ENCODE measurements at regions of chr2 and their contacts with region 1.

Region 1: GRCh38 chr2:203871371-203871983 is 3.9 kb downstream of the CTLA4 start:
- DNase-seq: peak; percentile 67
- H3K4me3 Mint-ChIP-seq: peak overlapping the region; percentile 78
- H3K27ac Mint-ChIP-seq: peak overlapping the region; percentile 97
- H3K4me1 Mint-ChIP-seq: peaks cover 90% of the 10 kb centered on the region
- H3K27me3 Mint-ChIP-seq: no peaks in the 10 kb centered on the region

Region 2: DNA sequence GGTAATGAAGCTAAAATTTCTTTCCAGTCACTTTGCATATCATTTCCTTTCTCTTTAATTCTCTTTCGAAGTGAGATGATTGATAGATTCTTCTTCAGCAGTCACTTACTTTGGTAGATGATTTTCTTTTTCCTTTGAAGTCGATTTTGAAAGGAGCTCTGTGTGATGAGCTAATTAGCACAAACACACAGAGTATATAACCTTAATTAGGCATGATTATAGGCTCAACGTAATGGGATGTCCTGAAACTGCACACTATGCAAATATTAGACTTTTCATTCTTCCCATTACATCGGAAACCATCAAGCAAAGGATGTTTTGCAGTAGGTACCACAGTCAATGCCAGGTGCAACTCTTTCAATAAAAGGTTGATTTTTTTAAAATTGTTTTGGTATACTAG is 10.3 kb before region 1 on chr2:
- CTCF ChIA-PET with region 1: interaction called, 29 read pairs
- POLR2A ChIA-PET with region 1: no interaction called
- DNase-seq: no peak
- H3K4me3 Mint-ChIP-seq: no peak overlapping the region
- H3K27ac Mint-ChIP-seq: peak overlapping the region; percentile 20
- H3K4me1 Mint-ChIP-seq: peaks cover 57% of the 10 kb centered on the region
- H3K27me3 Mint-ChIP-seq: no peaks in the 10 kb centered on the region

Region 3: GRCh38 chr2:203891474-203891873 is 20.0 kb after region 1 on chr2:
- CTCF ChIA-PET with region 1: interaction called, 20 read pairs
- POLR2A ChIA-PET with region 1: interaction called, 5 read pairs
- DNase-seq: peak; percentile 42
- H3K4me3 Mint-ChIP-seq: no peak overlapping the region
- H3K27ac Mint-ChIP-seq: no peak overlapping the region
- H3K4me1 Mint-ChIP-seq: peaks cover 56% of the 10 kb centered on the region
- H3K27me3 Mint-ChIP-seq: no peaks in the 10 kb centered on the region

Measured in activated CD4-positive, alpha-beta T cell treated with anti-CD3 and anti-CD28 coated beads, Interleukin-2, amount 10 ng/mL, durations not matched to agents 7 days and 5 days (primary cell).